Activated CD4-positive, alpha-beta memory T cell treated with anti-CD3 and anti-CD28 coated beads for 36 hours (primary cell): ENCODE measurements at regions of chr7 and their contacts with region 1.

Region 1: DNA sequence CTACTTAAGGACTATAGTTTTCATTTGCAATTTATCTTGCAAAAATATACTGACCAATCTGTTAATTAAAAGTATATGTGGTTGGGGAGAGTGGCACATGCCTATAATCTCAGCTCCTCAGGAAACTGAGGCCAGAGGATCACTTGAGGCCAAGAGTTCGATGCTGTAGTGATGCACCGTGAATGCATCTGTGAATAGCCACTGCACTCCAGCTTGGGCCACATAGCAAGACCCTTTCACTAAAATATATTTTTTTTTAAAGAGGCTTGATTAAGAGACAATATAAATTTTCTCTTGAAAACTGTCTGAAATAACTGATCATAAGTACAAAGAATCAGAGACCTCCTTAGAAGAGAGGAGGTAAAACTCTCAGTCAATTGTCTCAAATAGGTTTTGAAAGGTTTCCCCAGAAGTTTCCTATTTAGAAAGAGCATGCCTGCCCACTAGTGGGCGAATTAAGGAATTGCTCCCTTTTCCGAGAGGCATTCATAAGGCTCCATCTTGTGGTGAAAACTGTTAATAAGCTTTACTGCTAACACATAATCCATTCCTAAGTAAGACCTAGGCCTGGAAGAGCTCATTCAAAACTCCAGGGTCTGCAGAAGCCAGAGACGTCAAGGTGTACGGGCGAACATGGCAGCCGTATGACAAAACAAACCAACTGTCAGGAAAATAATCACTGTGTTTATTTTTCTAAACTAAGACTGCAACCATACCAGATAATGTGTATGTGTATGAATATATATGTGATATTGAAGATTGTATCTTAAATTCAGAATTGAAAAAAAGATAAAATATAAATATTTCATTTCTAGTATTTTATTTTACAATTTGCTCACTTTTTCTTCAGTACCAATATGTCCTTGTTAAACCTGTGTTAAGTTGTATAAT is 6.8 kb upstream of the TAS2R40 start:
- DNase-seq: peak; percentile 68
- H3K4me3 Mint-ChIP-seq: no peak overlapping the region
- H3K27ac Mint-ChIP-seq: no peak overlapping the region
- H3K4me1 Mint-ChIP-seq: no peaks in the 10 kb centered on the region
- H3K27me3 Mint-ChIP-seq: peaks cover 3% of the 10 kb centered on the region

Region 2: GRCh38 chr7:142323706-142324105 is 891.3 kb before region 1 on chr7:
- CTCF ChIA-PET with region 1: interaction called, 4 read pairs
- POLR2A ChIA-PET with region 1: no interaction called
- intact Hi-C with region 1: loop called (anchors 10 kb)
- DNase-seq: peak; percentile 75
- H3K4me3 Mint-ChIP-seq: peak overlapping the region; percentile 35
- H3K27ac Mint-ChIP-seq: peak overlapping the region; percentile 43
- H3K4me1 Mint-ChIP-seq: peaks cover 33% of the 10 kb centered on the region
- H3K27me3 Mint-ChIP-seq: peaks cover 6% of the 10 kb centered on the region

Region 3: DNA sequence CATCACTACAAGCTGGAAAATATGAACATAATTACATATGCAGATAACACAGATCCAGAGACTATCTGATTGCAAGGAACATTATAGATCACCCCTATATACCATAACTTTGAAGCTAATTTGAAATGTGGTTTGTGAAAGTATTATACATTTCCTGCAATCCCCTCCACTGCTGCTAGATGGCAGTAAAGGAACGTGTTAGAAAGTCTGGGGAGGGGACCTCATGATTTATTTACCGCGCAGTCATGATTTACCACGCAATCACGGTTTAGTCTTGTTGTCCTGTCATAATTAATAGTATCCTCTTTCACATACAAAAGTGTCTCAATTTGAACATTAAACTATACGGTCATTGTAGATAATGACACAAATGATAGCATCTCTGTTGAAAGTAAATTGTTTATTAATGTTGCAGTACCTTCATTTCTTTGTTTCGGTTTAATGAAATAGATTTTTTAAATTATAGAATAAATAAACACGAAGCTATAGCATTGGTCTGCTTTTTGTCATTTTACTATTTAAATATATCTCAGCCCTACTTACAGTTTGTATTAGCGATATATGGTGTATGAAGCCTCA is 611.1 kb before region 1 on chr7:
- CTCF ChIA-PET with region 1: interaction called, 12 read pairs
- POLR2A ChIA-PET with region 1: no interaction called
- intact Hi-C with region 1: loop called (anchors 5 kb)
- DNase-seq: peak; percentile 58
- H3K4me3 Mint-ChIP-seq: peak overlapping the region; percentile 35
- H3K27ac Mint-ChIP-seq: no peak overlapping the region
- H3K4me1 Mint-ChIP-seq: peaks cover 3% of the 10 kb centered on the region
- H3K27me3 Mint-ChIP-seq: no peaks in the 10 kb centered on the region

Region 4: DNA sequence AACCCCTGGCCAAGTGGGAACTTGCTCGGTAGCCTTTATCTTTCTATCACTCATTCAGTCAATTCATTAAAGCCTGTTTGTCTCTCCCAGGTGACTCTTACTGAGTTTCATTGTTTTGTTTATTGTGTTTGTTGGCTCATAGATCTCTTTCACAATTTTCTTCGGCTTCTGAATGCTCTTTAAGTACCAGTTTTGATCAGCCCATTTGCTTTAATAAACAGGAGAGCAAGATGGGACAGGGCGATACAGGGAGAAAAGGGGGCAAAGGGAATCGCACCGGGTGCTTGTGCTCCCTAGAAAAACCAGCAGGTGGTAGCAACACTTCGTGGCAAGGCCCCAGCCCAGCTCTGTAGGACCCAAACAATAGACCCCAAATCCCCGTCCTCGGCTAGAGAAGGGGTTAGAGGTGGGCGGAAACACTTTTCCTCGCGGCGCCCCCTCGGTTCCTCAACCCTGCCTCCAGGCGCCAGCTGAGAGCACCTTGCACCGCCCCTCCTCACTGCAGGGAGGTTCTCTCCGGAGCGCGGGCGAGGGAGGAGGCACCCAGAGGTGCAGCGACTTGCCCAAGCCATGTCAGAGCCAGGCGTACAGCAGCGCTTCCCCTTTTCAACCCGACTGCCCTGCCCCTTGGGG is 361.2 kb before region 1 on chr7:
- CTCF ChIA-PET with region 1: interaction called, 8 read pairs
- POLR2A ChIA-PET with region 1: no interaction called
- intact Hi-C with region 1: loop called (anchors 5 kb)
- DNase-seq: peak; percentile 73
- H3K4me3 Mint-ChIP-seq: peak overlapping the region; percentile 93
- H3K27ac Mint-ChIP-seq: peak overlapping the region; percentile 72
- H3K4me1 Mint-ChIP-seq: peaks cover 16% of the 10 kb centered on the region
- H3K27me3 Mint-ChIP-seq: peaks cover 3% of the 10 kb centered on the region

Region 5: DNA sequence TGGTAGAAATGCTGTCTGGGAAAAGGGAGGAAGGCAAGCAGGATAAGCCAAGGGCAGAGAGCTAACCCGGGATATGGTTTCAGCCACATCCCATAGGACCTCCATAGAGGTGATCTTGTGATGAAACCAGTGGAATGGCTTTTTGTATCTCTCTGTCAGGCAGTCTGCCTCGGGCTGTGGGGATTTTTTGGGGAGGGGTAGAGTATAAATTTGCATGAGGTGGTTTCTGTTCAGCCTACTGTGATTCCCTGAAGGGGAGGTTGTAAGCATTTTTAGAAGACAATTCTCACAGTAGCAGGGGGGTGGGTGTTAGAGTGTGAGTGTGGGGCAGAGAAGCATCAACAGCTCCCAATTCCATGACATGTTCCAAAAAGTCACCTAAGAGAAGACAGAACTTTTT is 200.0 kb before region 1 on chr7:
- CTCF ChIA-PET with region 1: interaction called, 402 read pairs
- POLR2A ChIA-PET with region 1: interaction called, 4 read pairs
- intact Hi-C with region 1: no loop called
- DNase-seq: no peak
- H3K4me3 Mint-ChIP-seq: no peak overlapping the region
- H3K27ac Mint-ChIP-seq: no peak overlapping the region
- H3K4me1 Mint-ChIP-seq: no peaks in the 10 kb centered on the region
- H3K27me3 Mint-ChIP-seq: peaks cover 9% of the 10 kb centered on the region

Region 6: DNA sequence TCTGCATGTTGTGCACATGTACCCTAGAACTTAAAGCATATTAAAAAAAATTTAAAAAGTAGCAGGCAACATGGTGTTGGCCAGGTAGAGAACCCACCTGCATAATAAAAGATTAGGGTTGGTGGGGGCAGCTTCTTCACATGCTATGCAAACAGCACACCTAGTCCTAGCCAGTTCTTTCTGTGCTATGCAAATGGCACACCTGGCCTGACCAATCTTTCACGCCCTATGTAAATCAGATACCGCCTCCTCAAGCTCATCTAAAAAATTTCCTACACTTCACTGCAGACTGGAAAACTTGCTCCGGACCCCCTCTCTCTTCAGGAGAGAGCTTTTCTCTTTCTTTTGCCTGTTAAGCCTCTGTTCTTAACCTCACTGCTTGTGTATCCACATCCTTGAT is 97.6 kb before region 1 on chr7:
- CTCF ChIA-PET with region 1: no interaction called
- POLR2A ChIA-PET with region 1: no interaction called
- intact Hi-C with region 1: no loop called
- DNase-seq: no peak
- H3K4me3 Mint-ChIP-seq: no peak overlapping the region
- H3K27ac Mint-ChIP-seq: no peak overlapping the region
- H3K4me1 Mint-ChIP-seq: no peaks in the 10 kb centered on the region
- H3K27me3 Mint-ChIP-seq: peaks cover 5% of the 10 kb centered on the region

Region 7: GRCh38 chr7:143229054-143229790 is 14.2 kb after region 1 on chr7:
- CTCF ChIA-PET with region 1: interaction called, 24 read pairs
- POLR2A ChIA-PET with region 1: no interaction called
- intact Hi-C with region 1: no loop called
- DNase-seq: no peak
- H3K4me3 Mint-ChIP-seq: no peak overlapping the region
- H3K27ac Mint-ChIP-seq: no peak overlapping the region
- H3K4me1 Mint-ChIP-seq: no peaks in the 10 kb centered on the region
- H3K27me3 Mint-ChIP-seq: no peaks in the 10 kb centered on the region

Region 8: GRCh38 chr7:143305423-143306070 is 90.5 kb after region 1 on chr7:
- CTCF ChIA-PET with region 1: interaction called, 12 read pairs
- POLR2A ChIA-PET with region 1: no interaction called
- intact Hi-C with region 1: no loop called
- DNase-seq: peak; percentile 82
- H3K4me3 Mint-ChIP-seq: no peak overlapping the region
- H3K27ac Mint-ChIP-seq: peak overlapping the region; percentile 64
- H3K4me1 Mint-ChIP-seq: peaks cover 49% of the 10 kb centered on the region
- H3K27me3 Mint-ChIP-seq: no peaks in the 10 kb centered on the region